ENCODE measurements at regions of chr5 and their contacts with region 1.

Region 1: DNA sequence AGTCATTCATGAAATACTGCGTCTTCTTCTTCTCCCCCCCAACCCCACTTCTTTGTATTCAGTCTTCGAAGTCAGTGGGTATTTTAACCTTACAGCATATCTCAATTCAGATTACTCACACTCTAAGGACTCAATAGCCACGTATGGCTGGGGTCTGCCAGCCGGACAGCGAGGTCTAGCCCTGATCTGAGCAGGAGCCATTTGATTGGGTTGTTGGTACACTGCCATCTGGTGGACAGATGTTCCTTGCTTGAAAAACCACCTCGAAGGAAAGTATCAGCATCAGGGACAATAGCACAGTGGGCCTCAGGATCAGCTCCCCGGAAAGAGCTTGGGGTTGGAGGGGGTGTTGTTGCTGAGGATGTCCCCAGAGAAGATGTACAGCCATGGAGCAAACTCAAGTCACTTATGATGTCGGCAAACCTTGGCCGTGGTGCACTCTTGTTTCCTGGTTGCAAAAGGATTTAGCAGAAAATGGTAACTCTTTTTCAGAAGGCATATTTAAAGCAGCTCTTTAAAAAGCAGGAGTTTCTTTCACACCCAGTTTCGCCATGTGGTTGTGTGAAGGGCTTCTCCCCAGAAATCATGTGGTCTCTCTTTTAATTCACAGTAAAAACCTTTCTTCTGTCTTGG is 31.7 kb upstream of the KCNMB1 start:
- DNase-seq: peak; percentile 48 to 73
- H3K4me3 ChIP-seq: no peak overlapping the region
- H3K27ac ChIP-seq: no peak overlapping the region
- H3K4me1 ChIP-seq: no peaks in the 10 kb centered on the region
- H3K27me3 ChIP-seq: no peaks in the 10 kb centered on the region
- CTCF ChIP-seq: peak; percentile 61 to 76 (median 76)
- POLR2A ChIP-seq: no peak

Region 2: DNA sequence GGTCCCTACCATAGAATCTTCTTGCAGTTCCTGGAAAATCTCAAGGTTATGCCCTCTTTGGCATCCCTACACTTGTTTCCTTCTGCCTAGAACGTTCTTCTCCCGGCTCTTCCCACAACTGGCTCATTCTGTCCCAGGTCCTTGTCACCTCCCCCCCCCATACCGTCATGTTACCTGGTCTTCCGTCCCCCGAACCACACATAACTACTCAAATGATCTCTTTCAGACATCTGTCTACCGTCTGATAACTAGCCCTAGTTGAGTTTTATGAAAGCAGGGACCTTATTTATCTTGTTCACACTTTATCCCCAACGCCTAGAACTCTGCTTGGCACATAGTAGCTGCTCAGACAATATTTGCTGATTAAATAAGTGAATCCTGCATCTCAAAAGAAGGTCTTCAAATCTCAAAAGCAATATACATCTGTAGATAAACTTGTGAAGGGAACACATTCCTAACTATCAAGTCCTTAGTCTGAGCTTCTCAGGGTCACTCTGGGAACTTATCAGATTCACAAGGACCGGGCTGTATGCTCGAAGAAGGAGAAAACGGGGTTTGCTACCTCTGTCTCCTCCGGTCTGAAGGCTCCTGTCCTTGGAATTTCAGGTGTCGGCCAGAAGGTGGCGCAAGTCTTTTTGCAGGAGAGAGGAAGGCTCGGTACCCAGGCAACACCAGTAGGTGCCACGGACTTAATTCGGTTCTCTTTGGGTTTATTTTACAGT is 153.3 kb before region 1 on chr5:
- intact Hi-C with region 1: loop called (anchors 10 kb)
- DNase-seq: peak; percentile 82 to 85
- H3K4me3 ChIP-seq: no peak overlapping the region
- H3K27ac ChIP-seq: peak overlapping the region; percentile 67 to 72
- H3K4me1 ChIP-seq: no peaks in the 10 kb centered on the region
- H3K27me3 ChIP-seq: no peaks in the 10 kb centered on the region
- CTCF ChIP-seq: peak; percentile 73 to 83 (median 81)
- POLR2A ChIP-seq: no peak

Region 3: GRCh38 chr5:170362102-170362501 is 58.8 kb before region 1 on chr5:
- intact Hi-C with region 1: loop called (anchors 2 kb)
- DNase-seq: peak in 1 of 2 donors; percentile 37
- H3K4me3 ChIP-seq: no peak overlapping the region
- H3K27ac ChIP-seq: peak overlapping the region; percentile 41 to 52
- H3K4me1 ChIP-seq: no peaks in the 10 kb centered on the region
- H3K27me3 ChIP-seq: no peaks in the 10 kb centered on the region
- CTCF ChIP-seq: no peak
- POLR2A ChIP-seq: no peak

Region 4: GRCh38 chr5:170614720-170615119 is 193.8 kb after region 1 on chr5:
- intact Hi-C with region 1: no loop called
- DNase-seq: no peak
- H3K4me3 ChIP-seq: no peak overlapping the region
- H3K27ac ChIP-seq: no peak overlapping the region
- H3K4me1 ChIP-seq: no peaks in the 10 kb centered on the region
- H3K27me3 ChIP-seq: no peaks in the 10 kb centered on the region
- CTCF ChIP-seq: no peak
- POLR2A ChIP-seq: no peak